Naive thymus-derived CD4-positive, alpha-beta T cell (primary cell): ENCODE measurements at regions of chr11 and their contacts with region 1.

Region 1: DNA sequence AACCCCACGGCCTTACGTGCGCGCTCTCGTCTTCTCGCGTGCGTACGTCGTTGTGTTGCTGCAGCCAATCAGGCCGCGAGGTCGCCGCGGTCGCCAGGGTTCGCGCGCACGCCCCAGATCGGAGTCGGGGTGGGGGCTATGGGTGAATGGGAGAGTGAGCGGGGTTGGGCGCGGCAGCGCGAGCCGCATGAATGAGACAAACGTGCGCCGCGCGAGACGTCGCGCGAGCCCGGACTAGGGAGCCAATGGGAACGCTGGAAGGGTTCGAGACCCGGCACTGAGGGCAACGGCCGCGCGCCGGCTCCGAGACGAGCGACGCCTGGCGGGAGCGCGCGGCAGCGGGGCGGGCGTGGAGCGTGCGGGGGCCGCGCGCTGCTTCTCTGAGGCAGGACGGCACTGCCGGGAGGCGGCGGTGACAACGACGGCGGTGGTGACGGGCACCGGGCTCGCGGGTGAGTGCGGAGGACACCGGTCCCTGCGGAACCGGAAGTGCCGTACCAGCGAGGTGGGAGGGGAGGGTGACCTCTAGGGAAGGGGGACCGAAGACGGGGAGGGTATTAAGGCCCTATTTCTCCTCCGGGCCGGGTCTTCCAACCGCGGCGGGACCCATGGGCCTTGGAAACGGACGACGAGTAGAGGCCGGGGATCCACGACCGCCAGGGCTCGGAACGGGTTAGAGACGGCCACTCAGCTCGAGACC is at the start of gene ZDHHC5:
- DNase-seq: peak; percentile 92 to 100 (median 100)
- ATAC-seq: peak; percentile 90
- H3K4me3 ChIP-seq: peak within 1 kb of the TSS; percentile 87
- H3K4me3 Mint-ChIP-seq: peak within 1 kb of the TSS; percentile 84 to 100 (median 91)
- H3K27ac ChIP-seq: peak within 1 kb of the TSS; percentile 97
- H3K27ac Mint-ChIP-seq: peak within 1 kb of the TSS; percentile 97 to 100 (median 98)
- H3K4me1 ChIP-seq: peaks cover 25 to 28% of the 10 kb centered on the region in 2 donors
- H3K4me1 Mint-ChIP-seq: peaks cover 35 to 62% (median 50%) of the 10 kb centered on the region in 7 donors
- H3K27me3 ChIP-seq: no peaks in the 10 kb centered on the region
- H3K27me3 Mint-ChIP-seq: no peaks in the 10 kb centered on the region
- total RNA-seq, gene ZDHHC5: 51.4 to 82.2 (median 59.1) TPM

Region 2: GRCh38 chr11:57335343-57336110 is 332.4 kb before region 1 on chr11 and contains the start of gene SSRP1:
- CTCF ChIA-PET with region 1: no interaction called
- POLR2A ChIA-PET with region 1: interaction called, 3 read pairs
- intact Hi-C with region 1: loop called (anchors 1 kb)
- DNase-seq: peak; percentile 64 to 90 (median 85)
- ATAC-seq: peak; percentile 99
- H3K4me3 ChIP-seq: peak within 1 kb of the TSS; percentile 77
- H3K4me3 Mint-ChIP-seq: peak within 1 kb of the TSS; percentile 91 to 98 (median 96)
- H3K27ac ChIP-seq: peak within 1 kb of the TSS; percentile 91
- H3K27ac Mint-ChIP-seq: peak within 1 kb of the TSS; percentile 96 to 100 (median 99)
- H3K4me1 ChIP-seq: peaks cover 15 to 19% of the 10 kb centered on the region in 2 donors
- H3K4me1 Mint-ChIP-seq: peaks cover 18 to 44% (median 35%) of the 10 kb centered on the region in 7 donors
- H3K27me3 ChIP-seq: no peaks in the 10 kb centered on the region
- H3K27me3 Mint-ChIP-seq: peaks cover 0 to 2% (median 0%) of the 10 kb centered on the region in 5 donors
- total RNA-seq, gene SSRP1: 46.9 to 146 (median 70.1) TPM

Region 3: DNA sequence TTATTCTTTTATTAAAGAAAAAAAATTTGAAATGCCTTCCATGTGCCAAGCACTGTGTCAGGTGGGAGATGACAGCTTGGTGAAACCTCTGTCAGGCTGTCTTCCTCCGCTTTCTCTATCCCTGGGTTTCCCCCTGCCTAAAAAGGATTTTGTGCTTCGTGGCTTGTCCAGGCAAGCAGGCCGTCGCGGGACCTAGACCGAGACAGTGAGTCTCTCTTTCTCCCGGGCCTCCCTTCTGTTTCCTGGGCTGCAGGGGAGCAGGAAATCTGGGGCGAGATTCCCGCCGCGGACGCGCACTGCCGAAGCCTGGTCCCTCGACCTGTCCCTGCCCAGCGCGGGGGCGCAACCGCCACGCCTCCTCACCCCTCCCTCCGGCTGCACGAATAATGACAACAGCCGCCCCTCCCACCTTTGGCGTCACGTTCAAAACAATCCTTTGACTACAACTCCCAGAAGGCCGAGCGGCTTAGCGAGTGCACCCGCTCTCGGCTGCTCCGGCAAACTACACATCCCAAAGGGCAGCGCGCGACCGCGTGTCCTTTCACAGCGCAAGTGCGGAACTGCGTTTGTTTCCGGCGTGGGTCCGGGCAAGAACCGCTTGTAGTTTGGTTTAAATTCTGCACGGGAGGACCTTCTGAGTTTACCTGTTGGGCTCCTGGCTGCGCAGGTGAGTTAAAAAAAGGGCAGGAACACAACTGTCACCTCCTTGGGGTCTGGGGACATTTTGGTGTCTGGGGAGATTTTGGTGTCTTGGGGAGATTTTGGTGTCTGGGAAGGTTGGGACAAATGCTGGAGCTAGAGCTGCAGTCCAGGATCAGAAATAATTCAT is 10.5 kb before region 1 on chr11 and contains the start of gene CLP1:
- CTCF ChIA-PET with region 1: interaction called, 5 read pairs
- POLR2A ChIA-PET with region 1: interaction called, 13 read pairs
- intact Hi-C with region 1: loop called (anchors 1 kb)
- DNase-seq: peak; percentile 87 to 99 (median 98)
- ATAC-seq: peak; percentile 99
- H3K4me3 ChIP-seq: peak within 1 kb of the TSS; percentile 64
- H3K4me3 Mint-ChIP-seq: peak within 1 kb of the TSS; percentile 89 to 100 (median 94)
- H3K27ac ChIP-seq: peak within 1 kb of the TSS; percentile 92
- H3K27ac Mint-ChIP-seq: peak within 1 kb of the TSS; percentile 88 to 98 (median 94)
- H3K4me1 ChIP-seq: peaks cover 4 to 10% of the 10 kb centered on the region in 2 donors
- H3K4me1 Mint-ChIP-seq: peaks cover 8 to 45% (median 36%) of the 10 kb centered on the region in 7 donors
- H3K27me3 ChIP-seq: no peaks in the 10 kb centered on the region
- H3K27me3 Mint-ChIP-seq: no peaks in the 10 kb centered on the region
- total RNA-seq, gene CLP1: 12.8 to 18.5 (median 14.7) TPM

Region 4: GRCh38 chr11:57792060-57792541 is 124.2 kb after region 1 on chr11:
- CTCF ChIA-PET with region 1: no interaction called
- POLR2A ChIA-PET with region 1: no interaction called
- intact Hi-C with region 1: loop called (anchors 1 kb)
- DNase-seq: peak; percentile 69 to 93 (median 90)
- ATAC-seq: peak; percentile 96
- H3K4me3 ChIP-seq: peak overlapping the region; percentile 15
- H3K4me3 Mint-ChIP-seq: peak overlapping the region; percentile 55 to 88 (median 77)
- H3K27ac ChIP-seq: peak overlapping the region; percentile 83
- H3K27ac Mint-ChIP-seq: peak overlapping the region; percentile 90 to 99 (median 99)
- H3K4me1 ChIP-seq: peaks cover 21 to 29% of the 10 kb centered on the region in 2 donors
- H3K4me1 Mint-ChIP-seq: peaks cover 37 to 53% (median 44%) of the 10 kb centered on the region in 7 donors
- H3K27me3 ChIP-seq: no peaks in the 10 kb centered on the region
- H3K27me3 Mint-ChIP-seq: peaks cover 0 to 2% (median 0%) of the 10 kb centered on the region in 5 donors

Region 5: GRCh38 chr11:58286249-58286648 is 618.4 kb after region 1 on chr11:
- CTCF ChIA-PET with region 1: no interaction called
- POLR2A ChIA-PET with region 1: no interaction called
- intact Hi-C with region 1: loop called in 1 of 2 experiments (anchors 5 kb)
- DNase-seq: peak in 1 of 9 donors; percentile 1
- ATAC-seq: peak; percentile 37
- H3K4me3 ChIP-seq: no peak overlapping the region
- H3K4me3 Mint-ChIP-seq: no peak overlapping the region
- H3K27ac ChIP-seq: no peak overlapping the region
- H3K27ac Mint-ChIP-seq: no peak overlapping the region
- H3K4me1 ChIP-seq: no peaks in the 10 kb centered on the region
- H3K4me1 Mint-ChIP-seq: peaks cover 0 to 12% (median 3%) of the 10 kb centered on the region in 7 donors
- H3K27me3 ChIP-seq: no peaks in the 10 kb centered on the region
- H3K27me3 Mint-ChIP-seq: peaks cover 0 to 32% (median 16%) of the 10 kb centered on the region in 5 donors

Region 6: GRCh38 chr11:58433638-58434203 is 765.8 kb after region 1 on chr11:
- CTCF ChIA-PET with region 1: no interaction called
- POLR2A ChIA-PET with region 1: no interaction called
- intact Hi-C with region 1: no loop called
- DNase-seq: no peak
- ATAC-seq: no peak
- H3K4me3 ChIP-seq: no peak overlapping the region
- H3K4me3 Mint-ChIP-seq: no peak overlapping the region
- H3K27ac ChIP-seq: no peak overlapping the region
- H3K27ac Mint-ChIP-seq: no peak overlapping the region
- H3K4me1 ChIP-seq: no peaks in the 10 kb centered on the region
- H3K4me1 Mint-ChIP-seq: no peaks in the 10 kb centered on the region
- H3K27me3 ChIP-seq: no peaks in the 10 kb centered on the region
- H3K27me3 Mint-ChIP-seq: peaks cover 0 to 25% (median 17%) of the 10 kb centered on the region in 5 donors

Region 7: DNA sequence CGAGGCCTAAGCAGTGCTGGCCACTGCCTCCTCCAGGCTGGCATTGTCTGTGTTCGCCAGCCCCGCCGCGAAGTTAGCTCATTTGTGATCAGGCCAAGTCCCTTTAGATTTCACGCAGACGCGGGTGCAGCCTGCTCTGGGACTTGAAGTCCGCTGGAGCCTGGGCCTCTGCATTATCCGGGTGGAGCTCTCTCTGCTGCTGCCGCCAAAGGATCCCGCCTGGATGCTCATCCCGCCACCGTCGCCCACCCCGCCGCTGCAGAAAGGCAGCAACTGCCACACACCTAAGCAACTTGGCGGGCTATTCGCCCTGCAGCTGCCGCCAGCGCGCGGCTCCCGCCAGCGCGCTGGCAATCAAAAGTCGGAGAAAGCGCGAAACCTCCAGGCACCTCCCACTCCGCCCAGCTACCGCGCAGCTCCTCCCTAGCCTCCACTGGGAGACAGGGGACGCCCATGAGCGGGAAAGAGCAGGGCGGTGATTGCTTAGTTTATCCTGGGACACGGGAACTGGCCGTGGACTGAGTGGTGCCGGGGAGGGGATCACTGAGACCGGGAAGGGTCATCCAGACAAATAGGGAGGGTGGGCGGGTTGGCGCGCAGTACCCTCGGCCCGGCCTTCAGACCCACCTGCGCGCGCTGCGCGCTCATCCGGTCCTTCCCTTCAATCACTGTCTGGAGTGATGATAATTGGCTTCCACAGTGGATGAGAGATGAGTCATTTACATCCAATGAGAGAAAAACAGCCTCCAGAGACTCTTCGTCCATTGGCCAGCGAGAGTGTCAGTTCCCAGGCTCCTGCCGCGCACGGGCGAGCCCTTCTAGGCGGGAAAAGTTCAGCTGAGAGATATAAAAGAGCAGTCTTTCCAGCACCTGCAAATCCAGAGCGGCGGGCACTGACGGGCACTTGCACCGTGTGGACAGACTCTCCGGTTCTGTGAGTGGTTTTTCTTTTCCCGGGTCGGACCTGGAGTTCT is 1438.8 kb after region 1 on chr11 and contains the start of gene FAM111B:
- CTCF ChIA-PET with region 1: no interaction called
- POLR2A ChIA-PET with region 1: no interaction called
- intact Hi-C with region 1: loop called in 1 of 2 experiments (anchors 1 kb)
- DNase-seq: peak; percentile 10 to 76 (median 39)
- ATAC-seq: peak; percentile 85
- H3K4me3 ChIP-seq: peak within 1 kb of the TSS; percentile 65
- H3K4me3 Mint-ChIP-seq: peak within 1 kb of the TSS; percentile 71 to 92 (median 83)
- H3K27ac ChIP-seq: no peak within 1 kb of the TSS
- H3K27ac Mint-ChIP-seq: peak within 1 kb of the TSS in 3 of 9 donors; percentile 13 to 83 (median 49)
- H3K4me1 ChIP-seq: peaks cover 12% of the 10 kb centered on the region in 2 donors
- H3K4me1 Mint-ChIP-seq: peaks cover 13 to 79% (median 26%) of the 10 kb centered on the region in 7 donors
- H3K27me3 ChIP-seq: peaks cover 0 to 5% of the 10 kb centered on the region in 2 donors
- H3K27me3 Mint-ChIP-seq: peaks cover 0 to 38% (median 34%) of the 10 kb centered on the region in 5 donors
- total RNA-seq, gene FAM111B: 0.11 to 79.8 (median 0.42) TPM in 4 of 5 experiments, not detected in the other